Activated T-helper 1 cell treated with anti-CD3 and anti-CD28 coated beads, Interleukin-12 subunit alpha, Interleukin-12 subunit beta, Interleukin-2, Interleukin-4 antibody, amounts not matched to agents 30 ng/mL and 10 ng/mL and 1 ng/mL, durations not matched to agents 14 hours and 24 hours and 36 hours (primary cell): ENCODE measurements at regions of chr16 and their contacts with region 1.

Region 1: GRCh38 chr16:23835390-23836077 is at the start of gene PRKCB:
- DNase-seq: peak; percentile 90
- H3K4me3 Mint-ChIP-seq: peak within 1 kb of the TSS; percentile 96
- H3K27ac Mint-ChIP-seq: peak within 1 kb of the TSS; percentile 90
- H3K4me1 Mint-ChIP-seq: peaks cover 69% of the 10 kb centered on the region
- H3K27me3 Mint-ChIP-seq: peaks cover 12% of the 10 kb centered on the region
- total RNA-seq, gene PRKCB: 100 and 109 TPM in 2 replicates

Region 2: DNA sequence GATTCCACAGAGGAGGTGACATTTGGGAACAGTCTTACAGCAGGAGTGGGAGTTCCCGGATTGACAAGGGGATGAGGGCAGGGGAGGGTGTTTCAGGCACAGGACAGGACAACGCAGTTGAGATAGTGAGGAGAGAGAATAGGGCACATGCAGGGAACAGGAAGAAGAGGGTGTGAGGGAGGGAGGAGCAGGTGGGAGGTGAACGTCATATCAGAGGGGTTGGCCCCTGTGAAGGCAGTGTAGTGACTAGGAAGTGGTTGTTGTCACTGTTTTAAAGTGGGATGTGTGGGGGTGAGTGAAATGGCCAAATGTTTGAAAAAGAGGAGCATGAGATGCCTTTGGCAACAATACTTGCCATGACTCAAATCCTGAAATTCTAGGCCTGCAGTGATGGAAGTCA is 12.4 kb after region 1 on chr16:
- intact Hi-C with region 1: loop called (anchors 1 kb)
- DNase-seq: peak; percentile 34
- H3K4me3 Mint-ChIP-seq: peak overlapping the region; percentile 53
- H3K27ac Mint-ChIP-seq: peak overlapping the region; percentile 78
- H3K4me1 Mint-ChIP-seq: peaks cover 88% of the 10 kb centered on the region
- H3K27me3 Mint-ChIP-seq: no peaks in the 10 kb centered on the region